IMR-90 (cell line): ENCODE measurements at regions of chr20 and their contacts with region 1.

Region 1: DNA sequence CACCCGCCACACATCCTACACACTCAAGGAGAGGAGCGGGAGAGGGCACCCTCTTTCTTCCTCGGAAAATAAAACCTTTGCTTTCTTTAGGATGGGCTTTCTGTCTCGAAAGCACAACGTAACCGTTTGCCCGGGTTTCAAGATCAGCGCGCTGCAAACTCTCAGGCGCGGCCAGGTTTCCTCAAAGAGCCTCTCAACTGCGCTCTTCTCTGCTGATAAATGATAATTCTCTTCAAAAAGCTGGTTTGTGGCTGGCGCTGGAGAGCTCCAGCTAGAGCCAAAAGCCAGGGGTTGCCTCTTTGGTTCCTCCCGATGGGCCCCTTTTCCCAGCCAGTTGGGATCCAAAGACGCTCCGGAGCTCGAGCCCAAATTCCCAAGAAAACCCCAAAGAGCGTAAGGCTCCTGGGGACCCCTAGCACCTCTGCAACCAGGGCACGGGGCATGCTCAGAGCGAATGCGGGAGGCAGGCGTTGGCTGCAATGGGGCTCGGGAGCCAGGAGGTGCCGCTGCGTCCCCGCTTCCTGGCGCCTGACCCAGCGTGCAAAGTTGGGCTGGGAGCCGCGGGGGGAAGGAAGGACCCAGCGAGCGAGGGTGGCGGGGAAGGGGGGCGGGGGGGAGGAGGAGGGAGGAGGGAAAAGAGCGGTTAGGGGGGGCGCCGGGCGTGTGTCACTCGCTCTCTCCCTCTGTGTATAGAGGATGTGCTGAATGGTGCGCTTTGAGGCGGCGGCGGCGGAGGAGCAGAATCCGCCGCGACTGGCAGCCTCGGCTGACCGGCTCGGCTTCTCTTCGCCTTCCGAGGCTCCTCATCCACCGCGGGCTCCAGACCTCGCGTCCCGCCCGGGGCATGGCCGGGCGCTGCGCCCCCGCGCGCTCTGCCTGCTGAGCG is at the start of gene PLCB1:
- DNase-seq: peak; percentile 78
- ATAC-seq: peak; percentile 89
- H3K4me3 ChIP-seq: peak within 1 kb of the TSS; percentile 69
- H3K27ac ChIP-seq: peak within 1 kb of the TSS; percentile 68
- H3K4me1 ChIP-seq: peaks cover 7% of the 10 kb centered on the region
- H3K27me3 ChIP-seq: no peaks in the 10 kb centered on the region
- CTCF ChIP-seq: peak; percentile 94
- POLR2A ChIP-seq: no peak
- RAD21 ChIP-seq: peak; percentile 93
- total RNA-seq, gene PLCB1: 16.1 and 17.5 TPM in 2 replicates

Region 2: DNA sequence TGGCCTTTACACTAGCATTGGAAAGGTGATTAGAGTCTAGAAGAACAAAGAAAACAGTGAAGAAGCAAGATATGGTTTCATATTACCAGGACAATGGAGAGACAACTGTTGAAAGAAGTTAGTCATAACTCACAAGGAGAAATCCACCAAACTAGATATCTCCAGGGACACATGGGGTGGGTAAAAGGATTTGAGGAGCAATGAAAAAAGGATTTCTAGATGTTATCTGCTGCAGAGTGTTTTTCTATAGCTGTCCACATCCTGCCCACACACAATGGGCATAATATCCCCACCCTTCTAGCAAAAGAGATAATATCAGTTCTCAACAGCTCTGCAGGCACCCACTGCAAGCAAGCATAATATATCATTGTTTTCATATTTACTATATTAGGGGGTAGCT is 494.7 kb before region 1 on chr20:
- CTCF ChIA-PET with region 1: no interaction called
- POLR2A ChIA-PET with region 1: no interaction called
- dilution Hi-C with region 1: no loop called
- in situ Hi-C with region 1: no loop called
- intact Hi-C with region 1: no loop called
- DNase-seq: no peak
- ATAC-seq: no peak
- H3K4me3 ChIP-seq: no peak overlapping the region
- H3K27ac ChIP-seq: no peak overlapping the region
- H3K4me1 ChIP-seq: no peaks in the 10 kb centered on the region
- H3K27me3 ChIP-seq: no peaks in the 10 kb centered on the region
- CTCF ChIP-seq: no peak
- POLR2A ChIP-seq: no peak
- RAD21 ChIP-seq: no peak

Region 3: GRCh38 chr20:8043687-8044282 is 88.1 kb before region 1 on chr20:
- CTCF ChIA-PET with region 1: interaction called, 3 read pairs
- POLR2A ChIA-PET with region 1: no interaction called
- dilution Hi-C with region 1: no loop called
- in situ Hi-C with region 1: no loop called
- intact Hi-C with region 1: loop called (anchors 1 kb)
- DNase-seq: peak; percentile 68
- ATAC-seq: peak; percentile 62
- H3K4me3 ChIP-seq: no peak overlapping the region
- H3K27ac ChIP-seq: no peak overlapping the region
- H3K4me1 ChIP-seq: no peaks in the 10 kb centered on the region
- H3K27me3 ChIP-seq: peaks cover 7% of the 10 kb centered on the region
- CTCF ChIP-seq: peak; percentile 71
- POLR2A ChIP-seq: no peak
- RAD21 ChIP-seq: peak; percentile 73

Region 4: DNA sequence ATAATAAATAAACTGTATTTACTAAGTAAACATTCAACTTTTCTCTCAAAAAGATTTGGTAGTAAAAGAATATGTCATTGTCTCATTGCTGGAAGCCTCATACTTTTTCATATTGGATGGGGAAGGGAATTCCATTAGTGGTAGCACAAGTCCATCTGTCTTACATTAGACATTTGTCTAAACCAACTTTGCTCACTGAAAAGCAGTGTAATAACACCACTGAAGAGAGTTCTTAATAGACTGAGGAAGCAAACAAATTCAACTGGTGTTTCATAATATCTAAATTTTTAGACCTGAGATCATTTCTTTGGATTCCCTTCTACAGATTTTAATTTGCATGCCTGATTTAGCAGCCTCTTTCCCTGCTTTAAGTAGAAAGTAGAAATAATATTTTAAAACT is 62.9 kb after region 1 on chr20:
- CTCF ChIA-PET with region 1: no interaction called
- POLR2A ChIA-PET with region 1: no interaction called
- dilution Hi-C with region 1: no loop called
- in situ Hi-C with region 1: no loop called
- intact Hi-C with region 1: no loop called
- DNase-seq: peak; percentile 19
- ATAC-seq: peak; percentile 56; the same call in 1 of the 2 replicates
- H3K4me3 ChIP-seq: no peak overlapping the region
- H3K27ac ChIP-seq: no peak overlapping the region
- H3K4me1 ChIP-seq: no peaks in the 10 kb centered on the region; the same call in 1 of the 2 replicates
- H3K27me3 ChIP-seq: no peaks in the 10 kb centered on the region
- CTCF ChIP-seq: no peak
- POLR2A ChIP-seq: no peak
- RAD21 ChIP-seq: no peak

Region 5: DNA sequence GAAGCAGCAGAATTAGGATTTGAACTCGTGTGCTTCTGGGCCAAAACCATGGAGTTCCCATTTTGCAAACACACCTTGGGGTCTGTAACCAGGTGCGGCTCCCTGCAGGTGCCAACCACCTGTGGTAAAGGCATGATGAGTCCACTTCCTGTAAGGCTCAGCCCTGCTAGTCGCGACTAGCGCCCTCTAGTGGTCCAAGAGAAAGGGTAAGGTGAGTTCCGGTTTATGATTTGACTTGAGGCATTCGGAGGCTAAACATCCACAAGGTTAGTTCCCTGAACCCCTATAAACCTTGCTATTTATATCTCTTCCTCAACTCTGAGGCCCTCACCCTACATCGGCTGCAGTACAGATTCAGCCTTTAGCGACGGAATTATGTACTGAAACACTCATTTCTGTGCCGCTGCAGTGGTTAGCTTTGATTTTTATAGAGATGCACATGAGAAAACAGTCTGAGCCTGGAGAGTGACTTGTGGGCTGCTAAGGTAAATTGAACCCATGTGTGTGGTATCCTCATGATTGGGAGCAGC is 173.7 kb after region 1 on chr20:
- CTCF ChIA-PET with region 1: no interaction called
- POLR2A ChIA-PET with region 1: no interaction called
- dilution Hi-C with region 1: no loop called
- in situ Hi-C with region 1: no loop called
- intact Hi-C with region 1: loop called (anchors 2 kb)
- DNase-seq: peak; percentile 33
- ATAC-seq: no peak
- H3K4me3 ChIP-seq: no peak overlapping the region
- H3K27ac ChIP-seq: no peak overlapping the region
- H3K4me1 ChIP-seq: peaks cover 2% of the 10 kb centered on the region; the same call in 1 of the 2 replicates
- H3K27me3 ChIP-seq: no peaks in the 10 kb centered on the region
- CTCF ChIP-seq: peak; percentile 40
- POLR2A ChIP-seq: no peak
- RAD21 ChIP-seq: peak; percentile 44

Region 6: GRCh38 chr20:8454137-8454712 is 322.4 kb after region 1 on chr20:
- CTCF ChIA-PET with region 1: no interaction called
- POLR2A ChIA-PET with region 1: no interaction called
- dilution Hi-C with region 1: no loop called
- in situ Hi-C with region 1: no loop called
- intact Hi-C with region 1: loop called (anchors 1 kb)
- DNase-seq: peak; percentile 97
- ATAC-seq: peak; percentile 96
- H3K4me3 ChIP-seq: no peak overlapping the region
- H3K27ac ChIP-seq: no peak overlapping the region
- H3K4me1 ChIP-seq: peaks cover 3% of the 10 kb centered on the region
- H3K27me3 ChIP-seq: no peaks in the 10 kb centered on the region
- CTCF ChIP-seq: peak; percentile 73
- POLR2A ChIP-seq: no peak
- RAD21 ChIP-seq: peak; percentile 82